CD4-positive, alpha-beta memory T cell (primary cell): ENCODE measurements at regions of chr6 and their contacts with region 1.

Region 1: DNA sequence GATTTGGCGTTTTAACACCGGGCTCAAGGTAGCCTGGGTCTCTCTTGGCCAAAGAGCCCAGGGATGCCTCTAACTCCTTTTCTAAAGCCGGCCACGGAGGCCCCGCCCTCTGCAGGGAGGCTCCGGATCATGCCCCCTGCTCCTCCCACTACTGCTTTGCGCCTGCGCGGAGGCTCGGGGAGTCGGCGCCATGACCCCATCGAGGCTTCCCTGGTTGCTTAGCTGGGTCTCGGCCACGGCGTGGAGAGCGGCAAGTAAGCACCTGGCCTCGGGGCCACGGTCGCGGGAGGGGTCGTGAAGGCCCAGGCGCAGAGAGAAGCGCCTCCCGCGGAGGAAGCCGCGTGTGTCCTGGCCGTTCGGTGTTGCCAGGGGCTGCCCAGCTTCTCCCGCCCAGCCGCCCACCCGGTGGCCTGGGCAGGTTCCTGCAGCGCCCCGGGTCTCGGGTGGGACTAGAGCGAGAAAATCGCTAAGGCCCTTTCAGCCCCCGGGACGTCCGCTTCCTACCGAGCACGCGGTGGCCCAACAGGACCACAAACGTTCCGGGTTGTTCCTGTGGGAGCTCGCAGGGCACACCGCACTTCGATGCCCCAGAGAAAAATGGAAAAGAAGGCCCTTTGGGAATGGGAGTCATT is at the start of gene SDHAF4:
- DNase-seq: peak; percentile 93 to 95 (median 94)
- H3K4me3 ChIP-seq: peak within 1 kb of the TSS; percentile 77 to 85
- H3K4me3 Mint-ChIP-seq: peak within 1 kb of the TSS; percentile 83 to 93 (median 91)
- H3K27ac ChIP-seq: peak within 1 kb of the TSS; percentile 81
- H3K27ac Mint-ChIP-seq: peak within 1 kb of the TSS; percentile 41 to 95 (median 92)
- H3K4me1 ChIP-seq: peaks cover 19% of the 10 kb centered on the region
- H3K4me1 Mint-ChIP-seq: peaks cover 13 to 25% (median 19%) of the 10 kb centered on the region in 4 donors
- H3K27me3 ChIP-seq: no peaks in the 10 kb centered on the region
- H3K27me3 Mint-ChIP-seq: no peaks in the 10 kb centered on the region
- total RNA-seq, gene SDHAF4: 12.3 to 13.8 TPM

Region 2: GRCh38 chr6:70413114-70413991 is 153.5 kb before region 1 on chr6 and contains the start of gene FAM135A:
- CTCF ChIA-PET with region 1: no interaction called
- POLR2A ChIA-PET with region 1: interaction called, 8 read pairs
- intact Hi-C with region 1: loop called (anchors 1 kb)
- DNase-seq: peak; percentile 90 to 96 (median 93)
- H3K4me3 ChIP-seq: peak within 1 kb of the TSS; percentile 59 to 62
- H3K4me3 Mint-ChIP-seq: peak within 1 kb of the TSS; percentile 93 to 97 (median 95)
- H3K27ac ChIP-seq: peak within 1 kb of the TSS; percentile 56
- H3K27ac Mint-ChIP-seq: peak within 1 kb of the TSS; percentile 90 to 96 (median 92)
- H3K4me1 ChIP-seq: peaks cover 17% of the 10 kb centered on the region
- H3K4me1 Mint-ChIP-seq: peaks cover 13 to 26% (median 20%) of the 10 kb centered on the region in 4 donors
- H3K27me3 ChIP-seq: no peaks in the 10 kb centered on the region
- H3K27me3 Mint-ChIP-seq: peaks cover 0 to 2% of the 10 kb centered on the region in 2 donors
- total RNA-seq, gene FAM135A: 11.3 to 14.5 TPM

Region 3: DNA sequence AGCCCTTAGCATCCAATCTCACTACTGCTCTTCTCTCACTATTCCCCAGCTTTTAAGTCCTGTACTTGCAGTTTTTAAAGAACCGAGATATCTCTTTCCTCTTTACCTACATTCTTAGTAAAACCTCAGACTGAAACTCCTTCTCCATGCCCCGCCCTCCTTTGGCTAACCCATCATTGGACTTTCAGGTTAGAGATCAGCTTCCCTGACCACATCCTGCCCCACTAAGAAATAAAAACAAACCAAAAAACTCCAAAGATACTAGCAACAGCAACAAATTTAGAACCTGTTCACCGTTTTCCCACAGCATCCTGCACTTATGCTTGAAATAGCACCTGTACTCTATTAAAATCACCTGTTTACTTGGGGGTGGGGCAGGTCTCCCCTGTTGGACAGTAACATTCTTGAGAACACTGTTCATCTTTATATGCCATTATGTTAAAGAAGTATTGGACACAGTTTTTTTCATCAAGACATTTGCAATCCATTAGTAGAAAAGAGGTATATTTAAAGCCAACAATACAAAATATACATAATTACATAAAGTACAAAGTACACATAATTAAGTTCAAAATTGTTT is 84.5 kb after region 1 on chr6:
- CTCF ChIA-PET with region 1: interaction called, 3 read pairs
- POLR2A ChIA-PET with region 1: interaction called, 7 read pairs
- intact Hi-C with region 1: loop called (anchors 2 kb)
- DNase-seq: peak; percentile 68 to 79 (median 74)
- H3K4me3 ChIP-seq: peak overlapping the region in 1 of 2 donors; percentile 21
- H3K4me3 Mint-ChIP-seq: peak overlapping the region; percentile 66 to 86 (median 80)
- H3K27ac ChIP-seq: peak overlapping the region; percentile 39
- H3K27ac Mint-ChIP-seq: peak overlapping the region; percentile 68 to 93 (median 87)
- H3K4me1 ChIP-seq: peaks cover 34% of the 10 kb centered on the region
- H3K4me1 Mint-ChIP-seq: peaks cover 21 to 46% (median 31%) of the 10 kb centered on the region in 4 donors
- H3K27me3 ChIP-seq: no peaks in the 10 kb centered on the region
- H3K27me3 Mint-ChIP-seq: no peaks in the 10 kb centered on the region